Heart right ventricle (tissue), 16 donors: ENCODE measurements at regions of chr6 and their contacts with region 1.

Region 1: DNA sequence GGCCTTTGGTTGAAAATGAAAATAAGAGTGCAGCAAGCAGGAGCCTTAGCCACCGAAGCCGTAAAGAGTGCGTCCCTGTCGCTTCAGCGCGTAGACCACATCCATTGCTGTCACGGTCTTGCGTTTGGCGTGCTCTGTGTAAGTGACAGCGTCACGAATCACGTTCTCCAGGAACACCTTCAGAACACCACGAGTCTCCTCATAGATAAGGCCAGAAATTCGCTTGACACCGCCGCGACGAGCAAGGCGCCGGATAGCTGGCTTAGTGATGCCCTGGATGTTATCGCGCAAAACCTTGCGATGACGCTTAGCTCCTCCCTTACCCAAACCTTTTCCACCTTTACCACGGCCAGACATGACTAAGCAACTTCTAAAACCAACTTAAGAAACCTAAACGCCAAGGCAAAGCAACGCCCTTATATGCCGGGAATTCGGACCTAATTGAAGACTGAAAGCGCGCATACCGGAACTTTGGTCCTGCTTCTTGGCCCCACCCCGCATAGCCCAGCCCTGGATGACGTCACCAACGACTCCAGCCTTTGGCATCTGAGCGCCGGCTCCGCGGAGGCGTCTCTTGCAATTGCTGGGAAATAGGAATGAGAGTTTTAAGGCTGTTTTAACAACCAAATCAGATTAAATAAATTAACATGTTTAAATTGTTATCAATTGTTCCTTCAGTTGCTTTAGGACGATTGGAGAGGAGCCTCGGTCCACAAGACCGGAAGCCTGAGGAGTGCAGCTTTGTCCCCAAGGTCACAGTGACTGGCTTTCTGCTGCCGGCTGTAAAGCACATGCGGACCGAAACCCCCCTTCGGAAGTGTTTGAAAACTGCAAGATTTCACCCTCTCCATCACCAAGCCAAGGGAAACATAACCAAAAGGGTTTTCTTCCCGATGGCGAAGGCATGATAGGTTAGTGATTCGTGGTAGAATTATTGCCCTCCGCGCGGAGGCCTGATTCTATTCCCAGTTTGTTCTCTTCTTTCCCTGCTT is 79.6 kb upstream of the BTN3A2 start:
- DNase-seq: peak; percentile 92 to 99
- ATAC-seq: peak; percentile 93 to 97 (median 96)
- H3K4me3 ChIP-seq: peak overlapping the region; percentile 29 to 78 (median 65)
- H3K27ac ChIP-seq: peak overlapping the region; percentile 87 to 96 (median 92)
- H3K4me1 ChIP-seq: peaks cover 0 to 22% (median 14%) of the 10 kb centered on the region in 9 donors
- H3K27me3 ChIP-seq: no peaks in the 10 kb centered on the region
- CTCF ChIP-seq: no peak

Region 2: DNA sequence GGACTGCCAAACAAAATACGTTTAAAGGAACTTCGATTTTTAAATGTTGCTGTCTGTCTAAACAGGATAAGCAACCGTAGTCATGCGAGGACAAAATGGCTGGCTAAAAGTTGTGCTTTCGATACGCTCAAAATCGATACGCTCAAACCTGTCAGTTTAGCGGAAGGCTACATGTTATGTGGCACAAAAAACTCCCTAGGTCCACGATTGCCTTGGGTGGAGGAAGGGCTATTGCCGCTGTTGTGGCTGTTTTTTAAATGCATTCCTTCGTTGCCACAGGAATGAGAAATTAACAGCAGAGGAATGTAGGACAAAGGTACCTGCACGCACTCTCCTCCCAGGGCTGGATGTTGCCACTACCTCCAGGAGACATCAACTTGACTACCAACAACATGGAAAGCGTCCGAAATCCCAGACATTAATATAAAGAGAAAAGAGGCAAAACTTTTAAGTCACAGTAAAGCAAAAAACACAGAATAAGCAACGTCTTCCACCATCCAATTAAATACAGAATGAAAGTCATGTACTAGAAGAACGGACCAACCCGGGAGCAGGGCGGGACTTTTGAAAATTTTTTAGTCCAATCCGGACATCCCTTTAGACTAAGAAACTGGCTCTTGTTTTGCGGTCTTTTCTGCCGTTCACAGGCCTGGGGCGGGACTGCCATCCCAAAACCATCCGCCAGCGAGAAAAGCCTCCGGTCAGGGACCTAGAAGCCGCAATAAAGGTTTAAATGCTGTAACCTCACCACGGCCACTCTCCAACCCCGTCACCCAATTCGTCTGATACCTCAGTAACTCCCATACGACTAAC is 230.4 kb before region 1 on chr6:
- intact Hi-C with region 1: loop called in 1 of 10 experiments (anchors 10 kb)
- DNase-seq: peak; percentile 66 to 95
- ATAC-seq: peak; percentile 83 to 91 (median 90)
- H3K4me3 ChIP-seq: peak overlapping the region; percentile 53 to 93 (median 76)
- H3K27ac ChIP-seq: peak overlapping the region; percentile 85 to 97 (median 94)
- H3K4me1 ChIP-seq: peaks cover 0 to 32% (median 16%) of the 10 kb centered on the region in 9 donors
- H3K27me3 ChIP-seq: no peaks in the 10 kb centered on the region
- CTCF ChIP-seq: peak in 3 of 9 donors; percentile 21 to 40 (median 23)

Region 3: DNA sequence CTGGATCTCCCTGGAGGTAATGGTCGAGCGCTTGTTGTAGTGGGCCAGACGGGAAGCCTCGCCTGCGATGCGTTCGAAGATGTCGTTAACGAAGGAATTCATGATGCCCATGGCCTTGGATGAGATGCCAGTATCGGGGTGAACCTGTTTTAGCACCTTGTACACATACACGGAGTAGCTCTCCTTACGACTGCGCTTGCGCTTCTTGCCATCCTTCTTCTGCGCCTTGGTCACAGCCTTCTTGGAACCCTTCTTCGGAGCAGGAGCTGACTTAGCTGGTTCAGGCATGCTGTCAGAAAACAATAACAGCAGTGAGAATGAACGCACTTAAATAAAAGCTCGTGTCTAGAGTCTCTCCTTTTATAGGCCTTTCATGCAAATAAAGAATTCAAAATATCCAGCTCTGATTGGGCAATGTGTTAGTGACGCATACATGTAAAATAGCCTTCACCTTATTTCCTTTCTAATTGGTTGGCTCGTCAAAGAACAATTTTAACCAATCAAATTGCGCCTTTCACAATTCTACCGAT is 69.0 kb before region 1 on chr6:
- intact Hi-C with region 1: loop called in 3 of 10 experiments (anchors 5 to 10 kb)
- DNase-seq: peak in 1 of 2 donors; percentile 78
- ATAC-seq: peak; percentile 81 to 94 (median 90)
- H3K4me3 ChIP-seq: peak overlapping the region; percentile 27 to 66 (median 58)
- H3K27ac ChIP-seq: peak overlapping the region; percentile 80 to 94 (median 88)
- H3K4me1 ChIP-seq: peaks cover 0 to 31% (median 20%) of the 10 kb centered on the region in 9 donors
- H3K27me3 ChIP-seq: peaks cover 0 to 30% (median 11%) of the 10 kb centered on the region in 7 donors
- CTCF ChIP-seq: no peak

Region 4: DNA sequence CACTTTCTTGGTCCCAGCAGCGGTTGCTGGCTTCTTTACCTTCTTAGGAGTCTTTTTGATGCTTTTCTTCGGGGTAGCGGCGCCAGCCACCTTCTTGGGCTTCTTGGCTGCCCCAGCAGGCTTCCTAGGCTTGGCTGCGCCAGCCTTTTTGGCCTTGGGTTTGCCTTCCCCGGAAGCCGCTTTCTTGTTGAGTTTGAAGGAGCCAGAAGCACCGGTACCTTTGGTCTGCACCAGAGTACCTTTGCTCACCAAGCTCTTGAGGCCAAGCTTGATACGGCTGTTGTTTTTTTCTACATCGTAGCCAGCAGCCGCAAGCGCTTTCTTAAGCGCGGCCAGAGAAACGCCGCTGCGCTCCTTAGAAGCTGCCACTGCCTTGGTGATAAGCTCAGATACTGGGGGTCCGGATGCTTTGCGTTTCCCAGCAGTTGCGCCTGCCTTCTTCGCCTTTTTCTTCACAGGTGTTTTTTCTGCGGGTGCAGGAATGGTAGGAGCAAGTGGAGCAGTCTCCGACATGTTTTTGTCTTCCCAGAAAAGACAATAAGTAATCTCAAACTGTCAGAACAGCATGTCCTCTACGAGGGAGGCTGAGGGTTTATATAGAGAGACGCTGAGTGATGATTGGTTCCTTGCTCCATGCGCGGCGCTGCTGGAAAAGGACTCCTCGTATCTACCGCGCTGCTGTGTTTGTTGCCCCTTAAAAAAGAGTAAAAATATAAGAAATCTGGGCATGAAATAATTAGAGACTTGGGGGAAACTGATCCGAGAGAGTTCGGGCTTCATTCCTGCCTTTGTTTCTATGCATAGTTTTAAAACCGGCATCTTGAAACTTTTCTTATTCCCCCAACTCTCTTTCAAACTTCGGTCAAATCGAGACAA is 50.8 kb before region 1 on chr6:
- intact Hi-C with region 1: loop called in 1 of 10 experiments (anchors 10 kb)
- DNase-seq: peak in 1 of 2 donors; percentile 54
- ATAC-seq: peak; percentile 70 to 92 (median 84)
- H3K4me3 ChIP-seq: peak overlapping the region; percentile 0 to 67 (median 55)
- H3K27ac ChIP-seq: peak overlapping the region in 9 of 10 donors; percentile 7 to 92 (median 49)
- H3K4me1 ChIP-seq: peaks cover 0 to 48% (median 15%) of the 10 kb centered on the region in 9 donors
- H3K27me3 ChIP-seq: peaks cover 4 to 88% (median 70%) of the 10 kb centered on the region in 7 donors
- CTCF ChIP-seq: no peak

Region 5: DNA sequence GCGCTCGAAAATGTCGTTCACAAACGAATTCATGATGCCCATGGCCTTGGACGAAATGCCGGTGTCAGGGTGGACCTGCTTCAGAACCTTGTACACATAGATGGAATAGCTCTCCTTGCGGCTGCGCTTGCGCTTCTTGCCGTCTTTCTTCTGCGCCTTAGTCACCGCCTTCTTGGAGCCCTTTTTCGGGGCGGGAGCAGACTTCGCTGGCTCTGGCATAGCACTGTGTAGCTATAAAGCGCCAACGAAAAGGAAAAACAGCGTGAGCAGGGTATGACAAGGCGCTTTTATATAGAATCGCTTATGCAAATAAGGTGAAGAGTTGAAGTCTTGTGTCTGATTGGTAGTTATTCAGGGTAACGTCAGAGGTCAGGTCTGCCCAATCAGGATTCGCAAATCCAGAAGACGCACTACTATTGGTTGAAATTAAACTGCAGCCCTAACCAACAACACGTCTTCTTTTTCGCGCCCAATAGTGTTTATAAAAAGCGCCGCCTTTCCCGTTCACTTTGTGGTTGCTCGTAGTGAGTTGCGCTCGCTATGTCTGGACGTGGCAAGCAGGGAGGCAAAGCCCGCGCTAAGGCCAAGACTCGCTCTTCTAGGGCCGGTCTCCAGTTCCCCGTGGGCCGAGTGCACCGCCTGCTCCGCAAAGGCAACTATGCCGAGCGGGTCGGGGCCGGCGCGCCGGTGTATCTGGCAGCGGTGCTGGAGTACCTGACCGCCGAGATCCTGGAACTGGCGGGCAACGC is 847.3 kb after region 1 on chr6:
- intact Hi-C with region 1: loop called in 1 of 10 experiments (anchors 10 kb)
- DNase-seq: peak; percentile 72 to 91
- ATAC-seq: peak; percentile 95 to 97 (median 96)
- H3K4me3 ChIP-seq: peak overlapping the region; percentile 31 to 67 (median 64)
- H3K27ac ChIP-seq: peak overlapping the region; percentile 11 to 90 (median 79)
- H3K4me1 ChIP-seq: peaks cover 0 to 42% (median 14%) of the 10 kb centered on the region in 9 donors
- H3K27me3 ChIP-seq: no peaks in the 10 kb centered on the region
- CTCF ChIP-seq: peak in 1 of 9 donors; percentile 6